Dorsolateral prefrontal cortex (tissue), 120 donors: ENCODE measurements at regions of chr10 and their contacts with region 1.

Region 1: GRCh38 chr10:53839440-53840039 is 961.5 kb downstream of the PCDH15 start:
- DNase-seq: no peak
- H3K4me3 ChIP-seq: no peak overlapping the region
- H3K27ac ChIP-seq: no peak overlapping the region
- H3K27me3 ChIP-seq: peaks cover 0 to 2% (median 0%) of the 10 kb centered on the region in 45 donors
- CTCF ChIP-seq: peak; percentile 42 to 88 (median 65)

Region 2: GRCh38 chr10:53957401-53957800 is 117.9 kb after region 1 on chr10:
- intact Hi-C with region 1: loop called in 1 of 2 experiments (anchors 10 kb)
- DNase-seq: peak in 2 of 10 donors; percentile 47 to 56
- H3K4me3 ChIP-seq: peak overlapping the region in 3 of 59 donors; percentile 2 to 18 (median 17)
- H3K27ac ChIP-seq: peak overlapping the region in 58 of 59 donors; percentile 8 to 95 (median 84)
- H3K27me3 ChIP-seq: no peaks in the 10 kb centered on the region
- CTCF ChIP-seq: no peak

Region 3: GRCh38 chr10:54402576-54402975 is 563.0 kb after region 1 on chr10:
- intact Hi-C with region 1: loop called in 1 of 2 experiments (anchors 5 kb)
- DNase-seq: no peak
- H3K4me3 ChIP-seq: no peak overlapping the region
- H3K27ac ChIP-seq: no peak overlapping the region
- H3K27me3 ChIP-seq: peaks cover 0 to 7% (median 0%) of the 10 kb centered on the region in 45 donors
- CTCF ChIP-seq: peak; percentile 15 to 79 (median 58)

Region 4: GRCh38 chr10:54594289-54594688 is 754.7 kb after region 1 on chr10:
- intact Hi-C with region 1: no loop called
- DNase-seq: no peak
- H3K4me3 ChIP-seq: no peak overlapping the region
- H3K27ac ChIP-seq: no peak overlapping the region
- H3K27me3 ChIP-seq: peaks cover 0 to 6% (median 0%) of the 10 kb centered on the region in 45 donors
- CTCF ChIP-seq: no peak